PC-3 (cell line): ENCODE measurements at regions of chr4 and their contacts with region 1.

Region 1: GRCh38 chr4:155906554-155907247 is 3.2 kb downstream of the TDO2 start:
- DNase-seq: peak; percentile 92
- ATAC-seq: peak; percentile 87
- H3K4me3 ChIP-seq: peak overlapping the region; percentile 48
- H3K27ac ChIP-seq: peak overlapping the region; percentile 98
- H3K4me1 ChIP-seq: peaks cover 22% of the 10 kb centered on the region
- H3K27me3 ChIP-seq: no peaks in the 10 kb centered on the region
- CTCF ChIP-seq: no peak

Region 2: DNA sequence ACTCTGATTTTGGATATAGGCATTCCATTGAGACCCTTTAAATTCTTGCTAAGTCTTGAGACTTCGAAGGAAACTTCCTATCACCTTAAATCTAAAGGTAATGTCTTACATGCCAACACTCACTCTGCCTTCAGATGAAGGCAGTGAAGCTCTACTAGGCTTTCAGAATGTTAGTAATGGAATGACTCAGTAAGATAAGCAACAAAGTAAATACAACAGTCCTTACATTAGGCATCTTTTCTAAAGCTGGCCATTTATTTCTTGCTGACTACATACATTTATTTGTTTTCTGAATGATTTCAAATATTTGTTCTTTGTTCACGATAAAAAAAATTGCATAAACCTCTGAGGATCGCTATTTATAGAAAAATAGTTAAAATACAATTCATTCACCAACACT is 84.1 kb before region 1 on chr4:
- CTCF ChIA-PET with region 1: no interaction called
- POLR2A ChIA-PET with region 1: no interaction called
- intact Hi-C with region 1: loop called (anchors 5 kb)
- DNase-seq: peak; percentile 83
- ATAC-seq: peak; percentile 98
- H3K4me3 ChIP-seq: no peak overlapping the region
- H3K27ac ChIP-seq: peak overlapping the region; percentile 89
- H3K4me1 ChIP-seq: peaks cover 28% of the 10 kb centered on the region
- H3K27me3 ChIP-seq: no peaks in the 10 kb centered on the region
- CTCF ChIP-seq: no peak